ENCODE measurements at regions of chr3 and their contacts with region 1.

Region 1: DNA sequence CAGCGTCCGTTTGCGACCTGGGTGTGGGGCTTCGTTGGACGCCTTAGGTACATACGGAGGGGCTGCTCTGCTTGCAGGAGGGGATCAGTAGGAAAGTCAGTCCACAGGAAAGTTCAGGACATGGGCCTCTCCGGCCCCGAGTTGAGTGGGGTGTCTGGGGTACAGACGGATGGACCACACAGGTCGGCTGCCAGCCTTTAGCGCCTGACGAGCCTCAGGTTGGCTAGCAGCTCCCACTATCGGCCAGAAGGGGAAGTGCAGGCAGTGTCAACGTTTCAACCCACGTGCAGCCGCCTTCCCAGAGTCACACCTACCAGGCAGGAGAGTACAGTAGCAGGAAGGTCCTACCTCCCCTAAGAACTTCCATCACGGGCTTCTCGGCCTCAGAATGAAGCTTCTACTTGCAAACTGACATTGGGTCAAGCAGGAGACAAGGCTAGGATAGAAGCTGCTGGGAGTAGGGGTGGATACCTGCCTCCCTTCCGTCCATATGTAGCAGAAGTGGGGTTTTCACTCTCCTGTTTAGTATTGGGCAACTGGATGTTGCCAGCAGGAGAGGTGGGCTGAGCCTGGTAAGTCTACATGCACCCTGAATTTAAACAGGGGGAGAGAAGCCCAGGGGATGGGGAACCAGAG is 1.8 kb upstream of the SCN5A start:
- DNase-seq: peak; percentile 29 to 34
- ATAC-seq: peak; percentile 63 to 82
- H3K4me3 ChIP-seq: peak overlapping the region in 1 of 4 donors; percentile 15
- H3K27ac ChIP-seq: no peak overlapping the region
- H3K4me1 ChIP-seq: peaks cover 6 to 10% of the 10 kb centered on the region in 2 donors
- H3K27me3 ChIP-seq: peaks cover 19 to 25% (median 24%) of the 10 kb centered on the region in 3 donors
- CTCF ChIP-seq: peak; percentile 81 to 92 (median 89)
- POLR2A ChIP-seq: no peak

Region 2: GRCh38 chr3:38496131-38496910 is 155.0 kb before region 1 on chr3 and contains the start of gene EXOG:
- in situ Hi-C with region 1: no loop called
- intact Hi-C with region 1: loop called (anchors 1 kb)
- DNase-seq: peak; percentile 88 to 89
- ATAC-seq: peak; percentile 87 to 94
- H3K4me3 ChIP-seq: peak within 1 kb of the TSS; percentile 62 to 87 (median 81)
- H3K27ac ChIP-seq: peak within 1 kb of the TSS; percentile 57 to 81 (median 72)
- H3K4me1 ChIP-seq: peaks cover 23 to 35% of the 10 kb centered on the region in 2 donors
- H3K27me3 ChIP-seq: no peaks in the 10 kb centered on the region
- CTCF ChIP-seq: peak; percentile 31 to 95 (median 71)
- POLR2A ChIP-seq: no peak
- total RNA-seq, gene EXOG: 1.6 to 6.5 (median 2.2) TPM

Region 3: DNA sequence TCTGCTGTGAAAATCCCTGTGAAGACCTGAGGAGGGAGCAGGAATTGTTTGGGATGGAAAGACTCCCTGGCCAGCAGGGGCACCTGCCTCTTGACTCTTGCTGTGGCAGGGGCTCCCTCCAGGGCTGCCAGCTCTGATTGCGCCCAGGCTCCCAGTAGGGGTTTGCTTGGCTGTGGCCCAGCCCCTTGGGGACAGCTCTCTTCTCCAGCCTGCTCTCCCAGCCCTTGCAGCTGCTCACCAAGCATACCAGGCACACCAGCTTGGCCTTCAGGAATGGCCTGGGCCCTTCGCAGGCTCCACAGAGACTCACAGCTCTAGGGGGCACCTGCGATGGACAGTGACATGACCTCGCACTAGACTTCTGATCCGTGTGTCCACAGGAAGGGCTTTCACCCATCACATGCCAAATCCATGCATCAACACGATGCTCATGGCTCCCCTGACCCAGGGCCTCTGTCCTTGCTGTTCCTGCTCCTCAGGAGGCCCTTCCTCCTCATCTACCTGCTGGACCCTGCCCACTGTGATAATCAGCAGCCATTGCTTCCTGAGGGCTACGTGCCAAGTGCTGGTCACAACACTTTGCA is 63.6 kb before region 1 on chr3:
- in situ Hi-C with region 1: no loop called
- intact Hi-C with region 1: no loop called
- DNase-seq: no peak
- ATAC-seq: no peak
- H3K4me3 ChIP-seq: no peak overlapping the region
- H3K27ac ChIP-seq: no peak overlapping the region
- H3K4me1 ChIP-seq: no peaks in the 10 kb centered on the region
- H3K27me3 ChIP-seq: no peaks in the 10 kb centered on the region
- CTCF ChIP-seq: no peak
- POLR2A ChIP-seq: no peak

Measured in gastrocnemius medialis (tissue), 4 donors.